Activated CD4-positive, alpha-beta memory T cell treated with anti-CD3 and anti-CD28 coated beads, Interleukin-2, amount 10 ng/mL, durations not matched to agents 7 days and 5 days (primary cell): ENCODE measurements at regions of chrX and their contacts with region 1.

Region 1: GRCh38 chrX:130086447-130087206 is 23.7 kb downstream of the ELF4 start:
- DNase-seq: peak; percentile 84
- H3K4me3 Mint-ChIP-seq: peak overlapping the region; percentile 81
- H3K27ac Mint-ChIP-seq: peak overlapping the region; percentile 95
- H3K4me1 Mint-ChIP-seq: peaks cover 76% of the 10 kb centered on the region
- H3K27me3 Mint-ChIP-seq: no peaks in the 10 kb centered on the region

Region 2: GRCh38 chrX:129976441-129976840 is 110.2 kb before region 1 on chrX:
- CTCF ChIA-PET with region 1: no interaction called
- POLR2A ChIA-PET with region 1: no interaction called
- DNase-seq: no peak
- H3K4me3 Mint-ChIP-seq: no peak overlapping the region
- H3K27ac Mint-ChIP-seq: no peak overlapping the region
- H3K4me1 Mint-ChIP-seq: peaks cover 13% of the 10 kb centered on the region
- H3K27me3 Mint-ChIP-seq: peaks cover 23% of the 10 kb centered on the region

Region 3: DNA sequence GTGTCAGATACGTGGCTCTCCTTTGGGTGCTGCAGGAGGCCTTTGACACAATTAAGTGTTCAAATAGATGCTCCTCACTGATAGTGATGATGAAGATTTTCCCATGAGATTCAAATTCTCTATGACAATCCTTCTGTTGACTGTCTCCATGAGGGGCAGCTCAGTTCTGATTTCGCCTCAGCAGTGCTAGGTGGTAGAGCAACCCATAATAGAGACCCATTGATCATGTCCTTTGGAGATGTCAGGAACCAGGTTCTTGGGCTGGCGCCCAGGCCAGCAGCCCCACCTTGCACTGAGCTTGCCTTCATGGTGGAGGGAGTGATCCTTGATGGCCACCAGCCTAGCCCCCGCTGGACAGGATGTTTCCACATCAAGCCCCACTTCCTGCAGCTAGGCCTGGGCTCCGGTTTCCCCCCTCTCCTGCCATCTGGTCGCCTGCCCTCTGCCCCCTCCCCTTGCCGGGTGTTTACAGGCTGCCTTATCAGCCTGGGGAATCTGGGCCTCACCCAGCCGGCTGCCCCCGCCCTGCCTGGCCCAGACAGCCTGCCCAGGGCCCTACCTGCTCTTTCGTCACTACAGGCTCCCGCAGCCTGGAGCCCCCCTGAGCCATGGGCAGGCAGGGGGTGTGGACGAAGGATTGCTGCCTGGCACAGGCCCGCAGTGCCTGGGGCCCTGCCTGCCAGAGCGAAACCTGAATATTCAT is 11.0 kb after region 1 on chrX:
- CTCF ChIA-PET with region 1: interaction called, 10 read pairs
- POLR2A ChIA-PET with region 1: interaction called, 16 read pairs
- DNase-seq: no peak
- H3K4me3 Mint-ChIP-seq: no peak overlapping the region
- H3K27ac Mint-ChIP-seq: peak overlapping the region; percentile 72
- H3K4me1 Mint-ChIP-seq: peaks cover 68% of the 10 kb centered on the region
- H3K27me3 Mint-ChIP-seq: no peaks in the 10 kb centered on the region

Region 4: GRCh38 chrX:130110379-130111219 is 24.0 kb after region 1 on chrX and contains the start of gene ELF4:
- CTCF ChIA-PET with region 1: interaction called, 7 read pairs
- POLR2A ChIA-PET with region 1: interaction called, 59 read pairs
- DNase-seq: peak; percentile 57
- H3K4me3 Mint-ChIP-seq: peak within 1 kb of the TSS; percentile 95
- H3K27ac Mint-ChIP-seq: peak within 1 kb of the TSS; percentile 90
- H3K4me1 Mint-ChIP-seq: peaks cover 45% of the 10 kb centered on the region
- H3K27me3 Mint-ChIP-seq: no peaks in the 10 kb centered on the region
- total RNA-seq, gene ELF4: 48.0 to 48.7 TPM

Region 5: DNA sequence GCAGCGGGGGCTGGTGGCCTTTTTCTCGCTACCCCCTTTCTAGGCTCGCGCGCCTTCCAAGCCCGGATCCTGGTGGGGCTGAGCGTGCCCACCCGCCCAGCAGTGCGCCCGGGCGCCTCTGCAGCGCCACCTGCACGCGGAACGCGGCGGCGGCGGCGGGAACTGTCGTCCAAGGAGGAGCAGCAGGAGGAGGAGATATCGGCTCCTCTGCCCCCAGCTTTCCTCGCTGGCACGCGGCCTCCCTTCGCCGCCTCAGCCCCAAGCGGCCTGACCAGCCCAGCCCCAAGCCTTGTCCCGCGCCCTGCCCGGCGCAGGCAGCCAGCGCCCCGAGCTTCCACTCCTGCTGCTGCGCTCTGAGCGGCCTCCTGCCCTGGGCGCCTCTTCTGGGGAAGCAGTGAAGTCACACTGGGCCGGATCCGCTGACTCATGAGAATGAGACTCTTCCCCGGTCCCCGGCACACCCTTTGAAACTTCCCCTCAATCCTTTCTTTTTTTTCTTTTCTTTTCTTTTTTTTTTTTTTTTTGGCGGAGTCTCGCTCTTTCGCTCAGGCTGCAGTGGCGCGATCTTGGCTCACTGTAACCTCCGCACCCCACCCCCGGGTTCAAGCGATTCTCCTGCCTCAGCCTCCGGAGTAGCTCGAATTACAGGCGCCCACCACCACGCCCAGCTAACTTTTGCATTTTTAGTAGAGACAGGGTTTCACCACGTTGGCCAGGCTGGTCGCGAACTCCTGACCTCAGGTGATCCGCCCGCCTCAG is 34.3 kb after region 1 on chrX:
- CTCF ChIA-PET with region 1: interaction called, 103 read pairs
- POLR2A ChIA-PET with region 1: interaction called, 55 read pairs
- DNase-seq: peak; percentile 69
- H3K4me3 Mint-ChIP-seq: peak overlapping the region; percentile 65
- H3K27ac Mint-ChIP-seq: peak overlapping the region; percentile 59
- H3K4me1 Mint-ChIP-seq: peaks cover 33% of the 10 kb centered on the region
- H3K27me3 Mint-ChIP-seq: no peaks in the 10 kb centered on the region

Region 6: GRCh38 chrX:130165703-130166502 is 79.3 kb after region 1 on chrX and contains the start of gene AIFM1:
- CTCF ChIA-PET with region 1: interaction called, 3 read pairs
- POLR2A ChIA-PET with region 1: interaction called, 38 read pairs
- DNase-seq: peak; percentile 90
- H3K4me3 Mint-ChIP-seq: peak within 1 kb of the TSS; percentile 82
- H3K27ac Mint-ChIP-seq: peak within 1 kb of the TSS; percentile 92
- H3K4me1 Mint-ChIP-seq: peaks cover 50% of the 10 kb centered on the region
- H3K27me3 Mint-ChIP-seq: no peaks in the 10 kb centered on the region
- total RNA-seq, gene AIFM1: 41.2 to 41.8 TPM